IMR-90 (cell line): ENCODE measurements at regions of chr13 and their contacts with region 1.

Region 1: GRCh38 chr13:76225815-76226489 is 589.8 kb downstream of the LMO7 start:
- DNase-seq: peak; percentile 90
- ATAC-seq: peak; percentile 83
- H3K4me3 ChIP-seq: no peak overlapping the region
- H3K27ac ChIP-seq: peak overlapping the region; percentile 51; the same call in 1 of the 2 replicates
- H3K4me1 ChIP-seq: peaks cover 4% of the 10 kb centered on the region; the same call in 1 of the 2 replicates
- H3K27me3 ChIP-seq: no peaks in the 10 kb centered on the region
- CTCF ChIP-seq: no peak
- POLR2A ChIP-seq: no peak
- RAD21 ChIP-seq: no peak

Region 2: GRCh38 chr13:76038920-76039716 is 186.8 kb before region 1 on chr13:
- CTCF ChIA-PET with region 1: no interaction called
- POLR2A ChIA-PET with region 1: no interaction called
- dilution Hi-C with region 1: no loop called
- in situ Hi-C with region 1: no loop called
- intact Hi-C with region 1: loop called (anchors 5 kb)
- DNase-seq: no peak
- ATAC-seq: no peak
- H3K4me3 ChIP-seq: no peak overlapping the region
- H3K27ac ChIP-seq: no peak overlapping the region
- H3K4me1 ChIP-seq: peaks cover 12% of the 10 kb centered on the region
- H3K27me3 ChIP-seq: no peaks in the 10 kb centered on the region
- CTCF ChIP-seq: no peak
- POLR2A ChIP-seq: no peak
- RAD21 ChIP-seq: no peak

Region 3: DNA sequence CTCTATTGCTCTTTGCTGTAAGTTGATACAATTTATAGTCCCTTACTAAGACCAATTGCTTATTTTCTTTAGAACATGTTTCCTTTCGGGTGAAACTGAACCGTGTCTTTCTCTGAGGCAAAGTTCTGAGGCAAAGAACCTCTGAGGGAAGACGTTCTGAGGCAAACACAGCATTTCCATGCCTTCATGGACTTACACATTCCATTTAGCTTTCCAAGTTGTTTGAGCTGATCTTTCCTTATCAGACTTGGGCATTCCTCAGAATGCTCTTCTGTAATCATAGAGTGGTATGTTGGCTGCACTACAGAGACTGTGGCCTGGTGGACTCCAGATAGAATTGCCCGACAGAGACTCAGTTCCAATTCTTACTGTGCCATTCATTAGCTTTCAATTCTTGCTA is 81.2 kb after region 1 on chr13:
- CTCF ChIA-PET with region 1: no interaction called
- POLR2A ChIA-PET with region 1: no interaction called
- dilution Hi-C with region 1: no loop called
- in situ Hi-C with region 1: no loop called
- intact Hi-C with region 1: loop called (anchors 2 kb)
- DNase-seq: peak; percentile 79
- ATAC-seq: peak; percentile 97
- H3K4me3 ChIP-seq: no peak overlapping the region
- H3K27ac ChIP-seq: peak overlapping the region; percentile 12; the same call in 1 of the 2 replicates
- H3K4me1 ChIP-seq: peaks cover 2% of the 10 kb centered on the region; the same call in 1 of the 2 replicates
- H3K27me3 ChIP-seq: no peaks in the 10 kb centered on the region
- CTCF ChIP-seq: 0 out of 2 replicates have a peak, but pooled peaks have one; percentile 10
- POLR2A ChIP-seq: no peak
- RAD21 ChIP-seq: peak; percentile 23; the same call in 1 of the 2 replicates

Region 4: GRCh38 chr13:76383676-76384461 is 157.9 kb after region 1 on chr13:
- CTCF ChIA-PET with region 1: no interaction called
- POLR2A ChIA-PET with region 1: no interaction called
- dilution Hi-C with region 1: no loop called
- in situ Hi-C with region 1: no loop called
- intact Hi-C with region 1: loop called (anchors 2 kb)
- DNase-seq: peak; percentile 94
- ATAC-seq: peak; percentile 95
- H3K4me3 ChIP-seq: no peak overlapping the region
- H3K27ac ChIP-seq: peak overlapping the region; percentile 58; the same call in 1 of the 2 replicates
- H3K4me1 ChIP-seq: peaks cover 4% of the 10 kb centered on the region; the same call in 1 of the 2 replicates
- H3K27me3 ChIP-seq: peaks cover 20% of the 10 kb centered on the region
- CTCF ChIP-seq: no peak
- POLR2A ChIP-seq: no peak
- RAD21 ChIP-seq: no peak